ENCODE measurements at regions of chr15 and their contacts with region 1.

Region 1: GRCh38 chr15:41904541-41905005 is 10.7 kb upstream of the SPTBN5 start:
- DNase-seq: no peak

Region 2: GRCh38 chr15:41849861-41850260 is 54.7 kb before region 1 on chr15:
- intact Hi-C with region 1: loop called in 1 of 2 experiments (anchors 2 kb)
- DNase-seq: no peak